Naive thymus-derived CD4-positive, alpha-beta T cell (primary cell): ENCODE measurements at regions of chr3 and their contacts with region 1.

Region 1: DNA sequence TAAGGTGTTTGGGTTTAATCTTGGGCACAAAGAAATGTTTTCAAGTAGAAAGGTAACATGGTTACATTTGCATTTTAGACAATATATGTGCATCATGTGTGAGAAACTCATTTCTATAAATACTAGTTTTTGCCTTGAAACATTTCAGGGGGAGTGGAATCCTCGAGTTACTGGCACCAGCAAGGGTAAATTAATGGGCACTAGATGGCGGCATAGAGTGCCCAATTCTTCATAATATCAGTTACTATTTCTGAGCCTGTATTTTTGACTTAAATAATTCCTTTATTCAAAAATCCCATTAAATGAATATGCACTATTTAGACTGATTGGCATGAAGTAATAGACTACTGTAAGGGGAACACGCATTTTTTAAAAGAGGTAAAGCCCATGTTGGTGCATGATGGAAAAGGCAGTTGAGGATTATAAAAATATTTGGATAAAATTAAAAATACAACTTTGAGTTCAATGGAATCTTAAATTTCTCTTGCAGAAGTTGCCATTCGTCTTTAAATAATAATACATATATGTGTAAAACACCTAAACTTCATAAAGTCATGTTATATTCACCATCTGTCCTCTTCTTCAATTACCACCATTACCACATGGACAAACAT is 106.3 kb downstream of the ZBTB20 start:
- DNase-seq: peak in 7 of 9 donors; percentile 15 to 48 (median 30)
- ATAC-seq: peak; percentile 66
- H3K4me3 ChIP-seq: no peak overlapping the region
- H3K4me3 Mint-ChIP-seq: no peak overlapping the region
- H3K27ac ChIP-seq: no peak overlapping the region
- H3K27ac Mint-ChIP-seq: peak overlapping the region in 2 of 9 donors; percentile 3 to 51
- H3K4me1 ChIP-seq: no peaks in the 10 kb centered on the region
- H3K4me1 Mint-ChIP-seq: peaks cover 0 to 35% (median 16%) of the 10 kb centered on the region in 7 donors
- H3K27me3 ChIP-seq: no peaks in the 10 kb centered on the region
- H3K27me3 Mint-ChIP-seq: no peaks in the 10 kb centered on the region

Region 2: GRCh38 chr3:114383875-114384557 is 656.8 kb before region 1 on chr3:
- CTCF ChIA-PET with region 1: no interaction called
- POLR2A ChIA-PET with region 1: no interaction called
- intact Hi-C with region 1: loop called in 1 of 2 experiments (anchors 5 kb)
- DNase-seq: peak; percentile 7 to 58 (median 37)
- ATAC-seq: peak; percentile 96
- H3K4me3 ChIP-seq: peak overlapping the region; percentile 57
- H3K4me3 Mint-ChIP-seq: peak overlapping the region in 8 of 10 donors; percentile 60 to 88 (median 77)
- H3K27ac ChIP-seq: no peak overlapping the region
- H3K27ac Mint-ChIP-seq: peak overlapping the region in 5 of 9 donors; percentile 27 to 73 (median 56)
- H3K4me1 ChIP-seq: peaks cover 0 to 7% of the 10 kb centered on the region in 2 donors
- H3K4me1 Mint-ChIP-seq: peaks cover 0 to 23% (median 12%) of the 10 kb centered on the region in 7 donors
- H3K27me3 ChIP-seq: no peaks in the 10 kb centered on the region
- H3K27me3 Mint-ChIP-seq: no peaks in the 10 kb centered on the region

Region 3: DNA sequence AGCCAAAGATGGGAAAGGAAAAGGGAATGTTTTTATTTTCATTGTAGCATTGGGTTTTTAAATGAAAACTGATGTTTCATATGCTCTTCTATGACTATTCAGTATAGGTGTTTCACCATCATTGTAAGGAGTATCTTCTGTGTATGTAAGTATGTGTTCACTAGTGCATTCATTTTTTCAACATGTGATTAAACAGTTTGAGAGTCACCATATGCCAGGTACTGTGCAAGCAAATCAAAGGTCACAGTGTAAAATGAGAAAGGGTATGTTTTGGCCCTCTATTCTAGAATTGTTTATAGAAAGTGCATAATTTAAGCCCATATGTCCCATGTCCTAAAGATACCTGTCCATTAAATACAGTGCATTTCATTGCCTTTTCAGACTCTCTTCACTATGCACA is 100.9 kb before region 1 on chr3:
- CTCF ChIA-PET with region 1: no interaction called
- POLR2A ChIA-PET with region 1: no interaction called
- intact Hi-C with region 1: no loop called
- DNase-seq: no peak
- ATAC-seq: no peak
- H3K4me3 ChIP-seq: no peak overlapping the region
- H3K4me3 Mint-ChIP-seq: no peak overlapping the region
- H3K27ac ChIP-seq: no peak overlapping the region
- H3K27ac Mint-ChIP-seq: no peak overlapping the region
- H3K4me1 ChIP-seq: no peaks in the 10 kb centered on the region
- H3K4me1 Mint-ChIP-seq: peaks cover 0 to 22% (median 12%) of the 10 kb centered on the region in 7 donors
- H3K27me3 ChIP-seq: no peaks in the 10 kb centered on the region
- H3K27me3 Mint-ChIP-seq: no peaks in the 10 kb centered on the region

Region 4: GRCh38 chr3:115092220-115092791 is 51.5 kb after region 1 on chr3:
- CTCF ChIA-PET with region 1: no interaction called
- POLR2A ChIA-PET with region 1: no interaction called
- intact Hi-C with region 1: loop called in 1 of 2 experiments (anchors 5 kb)
- DNase-seq: peak; percentile 24 to 62 (median 44)
- ATAC-seq: peak; percentile 76
- H3K4me3 ChIP-seq: no peak overlapping the region
- H3K4me3 Mint-ChIP-seq: no peak overlapping the region
- H3K27ac ChIP-seq: no peak overlapping the region
- H3K27ac Mint-ChIP-seq: peak overlapping the region in 5 of 9 donors; percentile 6 to 46 (median 32)
- H3K4me1 ChIP-seq: peaks cover 0 to 9% of the 10 kb centered on the region in 2 donors
- H3K4me1 Mint-ChIP-seq: peaks cover 3 to 73% (median 44%) of the 10 kb centered on the region in 7 donors
- H3K27me3 ChIP-seq: no peaks in the 10 kb centered on the region
- H3K27me3 Mint-ChIP-seq: no peaks in the 10 kb centered on the region

Region 5: GRCh38 chr3:116238846-116239565 is 1198.2 kb after region 1 on chr3:
- CTCF ChIA-PET with region 1: no interaction called
- POLR2A ChIA-PET with region 1: no interaction called
- intact Hi-C with region 1: no loop called
- DNase-seq: no peak
- ATAC-seq: no peak
- H3K4me3 ChIP-seq: no peak overlapping the region
- H3K4me3 Mint-ChIP-seq: no peak overlapping the region
- H3K27ac ChIP-seq: no peak overlapping the region
- H3K27ac Mint-ChIP-seq: no peak overlapping the region
- H3K4me1 ChIP-seq: no peaks in the 10 kb centered on the region
- H3K4me1 Mint-ChIP-seq: no peaks in the 10 kb centered on the region
- H3K27me3 ChIP-seq: no peaks in the 10 kb centered on the region
- H3K27me3 Mint-ChIP-seq: no peaks in the 10 kb centered on the region